Calu3 (cell line): ENCODE measurements at regions of chr3 and their contacts with region 1.

Region 1: DNA sequence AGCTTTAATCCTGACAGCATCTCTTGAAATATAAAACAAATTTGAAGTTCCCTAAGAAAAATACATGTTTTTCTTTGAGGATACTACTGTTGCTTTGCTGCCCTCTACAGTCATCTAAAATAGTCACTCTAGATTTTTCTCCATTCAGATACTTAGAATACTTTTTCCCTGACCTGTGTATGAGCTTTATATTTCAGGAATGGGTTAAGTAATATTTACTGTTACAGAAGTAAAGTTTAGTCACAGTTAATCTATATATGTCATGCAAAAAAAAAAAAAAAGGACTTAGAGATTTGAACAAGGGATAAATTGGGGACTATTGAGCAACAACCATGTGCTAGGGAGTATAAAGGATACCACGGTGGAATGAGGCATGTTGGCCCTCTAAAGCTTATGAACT is 8.8 kb downstream of the NECTIN3 start:
- DNase-seq: no peak
- H3K4me3 Mint-ChIP-seq: no peak overlapping the region
- H3K27ac Mint-ChIP-seq: no peak overlapping the region
- H3K4me1 Mint-ChIP-seq: peaks cover 6% of the 10 kb centered on the region
- H3K27me3 Mint-ChIP-seq: no peaks in the 10 kb centered on the region
- CTCF ChIP-seq: peak; percentile 49

Region 2: GRCh38 chr3:109532257-109533216 is 1547.9 kb before region 1 on chr3:
- CTCF ChIA-PET with region 1: no interaction called
- intact Hi-C with region 1: loop called (anchors 5 kb)
- DNase-seq: peak; percentile 84
- H3K4me3 Mint-ChIP-seq: no peak overlapping the region
- H3K27ac Mint-ChIP-seq: peak overlapping the region; percentile 4
- H3K4me1 Mint-ChIP-seq: peaks cover 15% of the 10 kb centered on the region
- H3K27me3 Mint-ChIP-seq: no peaks in the 10 kb centered on the region
- CTCF ChIP-seq: peak; percentile 21

Region 3: GRCh38 chr3:110666495-110667128 is 413.8 kb before region 1 on chr3:
- CTCF ChIA-PET with region 1: interaction called, 4 read pairs
- intact Hi-C with region 1: loop called (anchors 5 kb)
- DNase-seq: peak; percentile 51
- H3K4me3 Mint-ChIP-seq: peak overlapping the region; percentile 69
- H3K27ac Mint-ChIP-seq: peak overlapping the region; percentile 97
- H3K4me1 Mint-ChIP-seq: peaks cover 53% of the 10 kb centered on the region
- H3K27me3 Mint-ChIP-seq: no peaks in the 10 kb centered on the region
- CTCF ChIP-seq: no peak

Region 4: GRCh38 chr3:110814170-110815007 is 266.0 kb before region 1 on chr3:
- CTCF ChIA-PET with region 1: no interaction called
- intact Hi-C with region 1: loop called (anchors 5 kb)
- DNase-seq: peak; percentile 62
- H3K4me3 Mint-ChIP-seq: peak overlapping the region; percentile 44
- H3K27ac Mint-ChIP-seq: peak overlapping the region; percentile 89
- H3K4me1 Mint-ChIP-seq: peaks cover 44% of the 10 kb centered on the region
- H3K27me3 Mint-ChIP-seq: no peaks in the 10 kb centered on the region
- CTCF ChIP-seq: no peak

Region 5: DNA sequence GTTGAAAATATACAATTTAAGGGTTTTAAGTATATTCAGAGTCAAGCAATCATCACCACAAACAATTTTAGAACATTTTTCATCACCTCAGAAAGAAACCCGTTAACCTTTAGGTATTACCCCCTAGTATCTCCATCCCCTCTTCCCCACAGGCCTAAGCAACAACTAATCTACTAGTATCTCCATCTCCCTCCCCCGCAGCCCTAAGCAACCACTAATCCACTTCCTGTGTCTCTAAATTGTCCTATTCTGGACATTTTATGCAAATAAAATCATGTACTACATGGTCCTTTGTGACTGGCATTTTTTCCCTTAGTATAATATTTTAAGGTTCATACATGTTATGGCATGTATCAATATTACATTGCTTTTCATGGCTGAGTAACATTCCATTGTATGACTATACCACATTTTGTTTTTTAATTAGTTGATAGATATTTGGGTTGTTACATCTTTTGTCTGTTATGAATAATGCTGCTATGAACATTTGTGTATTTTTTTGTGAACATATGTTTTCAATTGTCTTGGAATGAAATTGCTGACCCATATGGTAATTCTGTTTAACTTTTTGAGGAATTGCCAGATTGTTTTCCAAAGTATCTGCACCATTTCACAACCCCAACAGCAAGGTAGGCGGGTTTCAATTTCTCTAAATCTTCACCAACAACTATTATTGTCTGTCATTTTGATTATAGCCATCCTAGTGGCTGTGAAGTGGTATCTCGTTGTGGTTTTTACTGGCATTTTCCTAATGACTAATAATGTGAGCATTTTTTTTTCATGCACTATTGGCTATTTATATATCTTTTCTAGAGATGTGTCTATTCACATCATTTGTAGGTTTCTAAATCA is 246.0 kb after region 1 on chr3:
- CTCF ChIA-PET with region 1: no interaction called
- intact Hi-C with region 1: loop called (anchors 10 kb)
- DNase-seq: no peak
- H3K4me3 Mint-ChIP-seq: no peak overlapping the region
- H3K27ac Mint-ChIP-seq: no peak overlapping the region
- H3K4me1 Mint-ChIP-seq: peaks cover 23% of the 10 kb centered on the region
- H3K27me3 Mint-ChIP-seq: no peaks in the 10 kb centered on the region
- CTCF ChIP-seq: no peak